ENCODE measurements at regions of chr18 and their contacts with region 1.

Region 1: GRCh38 chr18:28823506-28824182 is 646.7 kb upstream of the CDH2 start:
- DNase-seq: no peak
- H3K4me3 ChIP-seq: no peak overlapping the region
- H3K27ac ChIP-seq: no peak overlapping the region
- H3K4me1 ChIP-seq: no peaks in the 10 kb centered on the region
- CTCF ChIP-seq: no peak

Region 2: GRCh38 chr18:28802546-28802945 is 21.1 kb before region 1 on chr18:
- CTCF ChIA-PET with region 1: no interaction called
- POLR2A ChIA-PET with region 1: no interaction called
- intact Hi-C with region 1: no loop called
- DNase-seq: no peak
- H3K4me3 ChIP-seq: no peak overlapping the region
- H3K27ac ChIP-seq: no peak overlapping the region
- H3K4me1 ChIP-seq: no peaks in the 10 kb centered on the region
- CTCF ChIP-seq: no peak

Region 3: DNA sequence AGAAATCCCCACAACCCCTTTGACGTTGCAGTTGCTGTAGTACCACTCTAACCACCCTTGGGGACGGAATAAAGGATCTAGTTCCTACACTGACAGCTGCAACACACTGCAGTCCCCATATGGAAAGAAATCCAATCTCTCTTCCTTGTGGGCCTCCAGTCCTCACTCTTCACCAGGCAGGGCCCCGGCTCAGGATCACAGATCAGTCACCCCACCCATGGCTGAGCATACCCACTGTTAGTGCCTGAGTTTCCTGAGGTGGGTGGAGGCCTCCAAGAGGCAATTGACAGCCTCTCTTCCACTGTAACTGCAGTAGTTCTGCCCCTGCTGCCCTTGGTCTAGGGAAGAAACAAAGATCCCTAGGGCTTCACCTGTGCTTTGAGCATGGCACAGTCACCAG is 23.3 kb after region 1 on chr18:
- CTCF ChIA-PET with region 1: no interaction called
- POLR2A ChIA-PET with region 1: interaction called, 3 read pairs
- intact Hi-C with region 1: loop called (anchors 2 kb)
- DNase-seq: no peak
- H3K4me3 ChIP-seq: no peak overlapping the region
- H3K27ac ChIP-seq: no peak overlapping the region
- H3K4me1 ChIP-seq: no peaks in the 10 kb centered on the region
- CTCF ChIP-seq: no peak

Region 4: DNA sequence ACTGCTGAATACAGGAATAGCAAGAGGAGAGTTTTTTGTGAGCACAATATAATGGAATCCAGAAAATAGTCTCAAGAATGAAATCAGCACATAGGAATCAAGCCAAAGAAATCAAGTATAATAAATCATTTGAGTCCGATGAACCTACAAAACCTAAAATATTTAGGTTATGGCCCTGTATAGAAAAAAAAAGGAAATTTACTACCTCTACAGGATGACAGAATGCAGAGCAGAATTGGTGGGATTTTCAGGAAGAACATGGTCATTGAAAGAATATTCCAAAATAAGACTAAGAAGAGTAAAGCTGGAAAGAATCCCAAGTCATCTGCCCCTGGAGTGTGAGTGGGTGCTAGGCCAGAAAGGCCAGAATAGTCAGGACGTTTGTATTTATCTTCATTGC is 394.4 kb after region 1 on chr18:
- CTCF ChIA-PET with region 1: no interaction called
- POLR2A ChIA-PET with region 1: no interaction called
- intact Hi-C with region 1: no loop called
- DNase-seq: no peak
- H3K4me3 ChIP-seq: no peak overlapping the region
- H3K27ac ChIP-seq: no peak overlapping the region
- H3K4me1 ChIP-seq: no peaks in the 10 kb centered on the region
- CTCF ChIP-seq: no peak

Measured in OCI-LY7 (cell line).